ENCODE measurements at regions of chr4 and their contacts with region 1.

Region 1: GRCh38 chr4:15231265-15232091 is 196.4 kb upstream of the C1QTNF7 start:
- DNase-seq: peak in 2 of 3 donors; percentile 56 to 86
- ATAC-seq: peak; percentile 81
- H3K4me3 ChIP-seq: no peak overlapping the region
- H3K4me1 ChIP-seq: no peaks in the 10 kb centered on the region
- CTCF ChIP-seq: peak; percentile 35

Region 2: DNA sequence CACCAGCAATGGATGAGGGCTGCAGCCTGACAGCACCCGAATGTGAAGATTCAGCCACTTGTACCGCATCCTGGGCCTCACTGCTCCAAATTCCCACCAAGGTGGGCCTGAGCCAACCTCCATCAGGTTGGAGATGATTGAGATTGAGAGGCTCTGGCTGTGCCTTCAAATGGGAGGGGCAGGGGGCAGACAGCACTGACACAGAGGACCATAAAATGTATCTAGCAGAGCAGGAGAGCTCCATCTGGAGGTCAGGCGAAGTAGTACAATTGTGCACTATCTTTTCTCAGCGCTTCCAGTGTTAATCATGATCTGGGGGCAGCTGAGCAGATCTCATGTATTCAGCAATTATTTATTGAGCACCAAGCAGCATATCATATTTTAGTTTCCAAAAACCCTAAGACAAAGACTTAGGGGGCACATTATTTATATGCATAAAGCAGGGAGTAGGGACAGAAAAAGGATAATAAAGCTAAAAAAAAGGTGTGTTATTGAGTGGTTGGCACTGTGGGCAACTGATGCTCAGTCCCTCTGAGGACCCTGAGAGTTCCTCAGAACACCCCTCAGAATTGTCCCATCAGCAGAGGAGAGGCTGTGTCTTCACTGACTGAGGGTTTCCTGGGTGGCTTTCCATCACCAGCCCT is 164.8 kb after region 1 on chr4:
- intact Hi-C with region 1: loop called in 1 of 2 experiments (anchors 10 kb)
- DNase-seq: peak in 2 of 3 donors; percentile 30 to 73
- ATAC-seq: peak; percentile 81
- H3K4me3 ChIP-seq: no peak overlapping the region
- H3K4me1 ChIP-seq: no peaks in the 10 kb centered on the region
- CTCF ChIP-seq: peak; percentile 48

Measured in mucosa of descending colon (tissue), 3 donors.